Cardiac septum (tissue), 1 donor: ENCODE measurements at regions of chr14 and their contacts with region 1.

Region 1: GRCh38 chr14:39266871-39267591 is 33.3 kb downstream of the MIA2 start:
- DNase-seq: peak; percentile 96

Region 2: GRCh38 chr14:39102969-39103957 is 163.8 kb before region 1 on chr14 and contains the start of gene SEC23A:
- intact Hi-C with region 1: loop called (anchors 10 kb)
- DNase-seq: peak; percentile 96
- total RNA-seq, gene SEC23A: 90.9 TPM

Region 3: GRCh38 chr14:39174560-39175444 is 92.2 kb before region 1 on chr14 and contains the start of gene PNN:
- intact Hi-C with region 1: loop called (anchors 2 kb)
- DNase-seq: peak; percentile 99
- total RNA-seq, gene PNN: 30.0 TPM

Region 4: DNA sequence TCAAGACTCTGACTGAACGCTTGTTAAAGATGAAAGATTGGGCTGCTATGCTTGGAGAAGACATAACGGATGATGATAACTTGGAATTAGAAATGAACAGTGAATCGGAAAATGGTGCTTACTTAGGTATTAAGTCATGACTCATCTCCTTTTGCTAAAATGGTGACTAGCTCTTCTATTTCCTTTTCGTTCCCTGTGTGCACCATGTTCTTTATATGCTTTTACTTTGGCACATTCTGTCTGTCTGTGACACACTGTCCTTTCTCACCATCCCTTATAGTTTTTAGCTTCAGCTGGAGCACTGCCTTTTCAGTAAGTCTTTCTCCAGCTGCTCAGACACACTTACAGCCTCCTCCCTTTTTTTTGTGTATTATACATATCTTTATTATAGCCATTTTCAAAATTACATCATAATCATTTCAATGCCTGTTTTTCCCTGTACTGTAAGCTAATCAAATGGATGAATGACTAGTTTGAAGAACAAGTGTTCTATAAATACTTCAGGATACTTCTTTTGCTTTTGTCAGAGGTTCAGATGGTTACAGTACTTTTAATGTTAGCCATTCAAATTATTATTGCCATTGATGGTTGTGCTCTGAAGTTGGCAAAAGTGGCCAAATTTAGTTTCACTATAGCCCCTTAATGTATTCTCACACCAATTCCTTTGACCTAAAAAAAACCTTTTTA is 35.2 kb after region 1 on chr14:
- intact Hi-C with region 1: loop called (anchors 5 kb)
- DNase-seq: no peak

Region 5: GRCh38 chr14:39432179-39432618 is 165.2 kb after region 1 on chr14 and contains the start of gene FBXO33:
- intact Hi-C with region 1: loop called (anchors 2 kb)
- DNase-seq: peak; percentile 99
- total RNA-seq, gene FBXO33: 6.3 TPM